ENCODE measurements at regions of chr12 and their contacts with region 1.

Region 1: GRCh38 chr12:107317751-107318613 is 224.6 kb upstream of the CRY1 start:
- DNase-seq: peak; percentile 94
- H3K4me3 ChIP-seq: peak overlapping the region; percentile 57 to 82 (median 76)
- H3K27ac ChIP-seq: peak overlapping the region; percentile 18
- H3K4me1 ChIP-seq: peaks cover 20% of the 10 kb centered on the region
- H3K27me3 ChIP-seq: peaks cover 2% of the 10 kb centered on the region
- CTCF ChIP-seq: peak; percentile 15 to 57

Region 2: GRCh38 chr12:106986625-106987430 is 331.2 kb before region 1 on chr12 and contains the start of gene MTERF2:
- CTCF ChIA-PET with region 1: no interaction called
- dilution Hi-C with region 1: no loop called
- in situ Hi-C with region 1: no loop called
- intact Hi-C with region 1: no loop called
- DNase-seq: peak; percentile 94
- H3K4me3 ChIP-seq: peak within 1 kb of the TSS; percentile 49 to 81 (median 61)
- H3K27ac ChIP-seq: peak within 1 kb of the TSS; percentile 69
- H3K4me1 ChIP-seq: peaks cover 5% of the 10 kb centered on the region
- H3K27me3 ChIP-seq: no peaks in the 10 kb centered on the region
- CTCF ChIP-seq: peak in 1 of 2 donors; percentile 0
- total RNA-seq, gene MTERF2: 7.0 to 8.0 TPM

Region 3: GRCh38 chr12:107131832-107132616 is 186.0 kb before region 1 on chr12:
- CTCF ChIA-PET with region 1: interaction called, 9 read pairs
- dilution Hi-C with region 1: no loop called
- in situ Hi-C with region 1: loop called in 1 of 2 experiments (anchors 5 kb)
- intact Hi-C with region 1: loop called (anchors 1 kb)
- DNase-seq: peak; percentile 53
- H3K4me3 ChIP-seq: no peak overlapping the region
- H3K27ac ChIP-seq: no peak overlapping the region
- H3K4me1 ChIP-seq: no peaks in the 10 kb centered on the region
- H3K27me3 ChIP-seq: no peaks in the 10 kb centered on the region
- CTCF ChIP-seq: peak; percentile 87 to 95

Region 4: DNA sequence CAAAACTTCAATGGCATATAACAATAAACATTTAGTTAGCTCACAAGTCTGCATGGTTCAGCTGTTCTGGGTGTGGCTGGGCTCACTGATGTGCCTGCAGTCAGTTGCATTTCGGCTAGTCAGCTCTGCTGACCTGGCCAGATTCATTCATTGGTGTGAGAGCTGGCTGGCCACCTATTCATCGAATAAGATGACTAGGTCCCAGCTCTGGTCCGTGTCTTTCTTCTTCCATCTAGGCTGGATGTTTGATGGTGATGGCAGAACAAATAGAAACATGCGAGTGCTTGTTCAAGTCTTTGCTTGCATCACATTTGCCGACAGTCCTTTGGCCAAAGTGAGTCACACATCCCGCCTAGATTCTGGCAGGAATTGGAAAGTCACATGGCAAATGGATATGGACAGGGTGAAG is 21.3 kb before region 1 on chr12:
- CTCF ChIA-PET with region 1: no interaction called
- dilution Hi-C with region 1: no loop called
- in situ Hi-C with region 1: no loop called
- intact Hi-C with region 1: loop called (anchors 2 kb)
- DNase-seq: peak; percentile 97
- H3K4me3 ChIP-seq: peak overlapping the region in 1 of 3 experiments; percentile 10
- H3K27ac ChIP-seq: peak overlapping the region; percentile 77
- H3K4me1 ChIP-seq: peaks cover 25% of the 10 kb centered on the region
- H3K27me3 ChIP-seq: no peaks in the 10 kb centered on the region
- CTCF ChIP-seq: no peak

Region 5: GRCh38 chr12:107356266-107356936 is 38.4 kb after region 1 on chr12:
- CTCF ChIA-PET with region 1: no interaction called
- dilution Hi-C with region 1: no loop called
- in situ Hi-C with region 1: no loop called
- intact Hi-C with region 1: loop called (anchors 5 kb)
- DNase-seq: peak; percentile 79
- H3K4me3 ChIP-seq: no peak overlapping the region
- H3K27ac ChIP-seq: no peak overlapping the region
- H3K4me1 ChIP-seq: peaks cover 46% of the 10 kb centered on the region
- H3K27me3 ChIP-seq: no peaks in the 10 kb centered on the region
- CTCF ChIP-seq: no peak